GM18951 (cell line): ENCODE measurements at regions of chr1 and their contacts with region 1.

Region 1: GRCh38 chr1:46527474-46528296 is 23.8 kb downstream of the KNCN start:
- POLR2A ChIP-seq: no peak

Region 2: DNA sequence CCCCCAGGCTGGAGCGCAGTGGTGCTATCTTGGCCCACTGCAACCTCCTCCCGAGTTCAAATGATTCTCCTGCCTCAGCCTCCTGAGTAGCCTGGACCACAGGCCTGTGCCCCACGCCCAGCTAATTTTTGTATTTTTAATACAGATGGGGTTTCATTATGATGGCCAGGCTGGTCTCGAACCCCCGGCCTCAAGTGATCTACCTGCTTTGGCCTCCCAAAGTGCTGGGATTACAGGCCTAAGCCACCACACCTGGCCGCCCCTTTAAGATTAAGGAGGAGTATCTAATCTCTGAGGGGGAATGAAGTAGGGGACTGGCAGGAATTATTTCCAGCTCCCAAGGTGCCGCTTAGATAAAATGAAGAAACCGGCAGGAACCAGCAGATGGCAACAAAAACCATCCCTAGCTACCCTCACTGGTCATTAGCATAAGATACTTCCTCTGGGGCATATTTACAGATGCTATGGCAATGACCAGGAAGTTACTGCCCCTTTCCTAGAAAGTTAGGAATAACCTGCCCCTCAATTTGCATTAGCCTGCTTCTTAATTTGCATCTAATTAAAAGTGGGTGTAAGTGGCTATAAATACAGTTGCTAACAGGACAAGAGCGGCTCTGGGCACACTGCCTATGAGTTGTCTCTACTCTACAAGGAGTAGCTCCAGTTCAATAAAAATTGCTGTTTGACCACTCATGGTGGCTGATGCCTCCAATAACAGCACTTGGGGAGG is 194.2 kb before region 1 on chr1:
- in situ Hi-C with region 1: no loop called
- POLR2A ChIP-seq: peak; percentile 55

Region 3: GRCh38 chr1:46442317-46443161 is 85.1 kb before region 1 on chr1:
- in situ Hi-C with region 1: loop called (anchors 10 kb)
- POLR2A ChIP-seq: no peak